ENCODE measurements at regions of chr1 and their contacts with region 1.

Region 1: GRCh38 chr1:166814611-166815010 is 24.7 kb upstream of the POGK start:
- DNase-seq: no peak
- ATAC-seq: no peak
- H3K4me3 ChIP-seq: no peak overlapping the region
- H3K27ac ChIP-seq: no peak overlapping the region
- H3K4me1 ChIP-seq: no peaks in the 10 kb centered on the region
- H3K27me3 ChIP-seq: no peaks in the 10 kb centered on the region

Region 2: GRCh38 chr1:166527752-166528151 is 286.9 kb before region 1 on chr1:
- intact Hi-C with region 1: loop called in 1 of 4 experiments (anchors 10 kb)
- DNase-seq: no peak
- ATAC-seq: no peak
- H3K4me3 ChIP-seq: no peak overlapping the region
- H3K27ac ChIP-seq: no peak overlapping the region
- H3K4me1 ChIP-seq: no peaks in the 10 kb centered on the region
- H3K27me3 ChIP-seq: no peaks in the 10 kb centered on the region

Region 3: GRCh38 chr1:166716620-166717019 is 98.0 kb before region 1 on chr1:
- intact Hi-C with region 1: no loop called
- DNase-seq: no peak
- ATAC-seq: no peak
- H3K4me3 ChIP-seq: no peak overlapping the region
- H3K27ac ChIP-seq: no peak overlapping the region
- H3K4me1 ChIP-seq: no peaks in the 10 kb centered on the region
- H3K27me3 ChIP-seq: no peaks in the 10 kb centered on the region